Panc1 (cell line): ENCODE measurements at regions of chr4 and their contacts with region 1.

Region 1: GRCh38 chr4:183249857-183250256 is 70.2 kb downstream of the CLDN22 start:
- DNase-seq: no peak
- ATAC-seq: 0 out of 2 replicates have a peak, but pooled peaks have one; percentile 68
- H3K4me3 ChIP-seq: no peak overlapping the region
- H3K27ac ChIP-seq: peak overlapping the region; percentile 12; the same call in 1 of the 2 replicates
- H3K4me1 ChIP-seq: peaks cover 17% of the 10 kb centered on the region
- H3K27me3 ChIP-seq: no peaks in the 10 kb centered on the region
- CTCF ChIP-seq: peak; percentile 44

Region 2: DNA sequence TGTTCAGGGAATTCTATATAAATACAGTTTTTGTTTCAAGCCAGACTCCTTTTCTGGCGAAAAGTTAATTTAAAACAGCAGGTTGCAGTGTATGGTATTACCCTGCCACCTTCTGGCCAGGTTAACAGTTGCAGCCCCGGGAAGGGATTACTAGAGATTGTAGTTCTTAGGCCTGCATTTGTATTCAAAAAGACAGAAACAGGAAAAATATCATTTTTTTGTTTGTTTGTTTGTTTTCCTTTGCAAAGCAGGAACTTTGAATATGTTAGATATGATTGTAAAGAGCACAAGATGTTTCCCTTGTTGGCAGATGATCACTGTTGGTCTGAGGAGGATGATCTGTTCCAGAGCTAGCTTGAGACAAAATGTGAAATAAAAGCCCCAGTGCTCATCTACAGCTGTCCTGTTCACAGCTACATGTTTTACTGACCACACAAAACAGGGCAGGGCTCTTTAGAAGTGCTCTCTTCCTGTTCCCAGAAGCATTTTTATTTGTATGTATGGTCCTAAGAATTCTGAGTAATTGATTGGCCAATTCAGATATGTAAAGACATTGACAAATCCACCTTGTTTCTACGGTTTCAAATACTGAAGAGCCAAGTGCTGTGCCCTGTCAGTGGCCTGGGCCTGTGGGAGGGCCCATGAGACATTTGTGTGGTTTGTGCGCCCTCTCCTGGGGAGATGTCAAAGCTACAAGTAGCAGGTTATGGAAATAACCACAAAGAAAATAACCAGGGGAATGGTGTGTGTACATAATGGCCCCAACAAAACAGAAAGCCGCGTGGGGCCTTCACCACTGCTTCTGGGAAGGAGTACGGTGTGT is 12.3 kb after region 1 on chr4:
- CTCF ChIA-PET with region 1: interaction called, 10 read pairs
- POLR2A ChIA-PET with region 1: no interaction called
- in situ Hi-C with region 1: no loop called
- intact Hi-C with region 1: no loop called
- DNase-seq: no peak
- ATAC-seq: peak; percentile 89
- H3K4me3 ChIP-seq: no peak overlapping the region
- H3K27ac ChIP-seq: peak overlapping the region; percentile 66
- H3K4me1 ChIP-seq: peaks cover 12% of the 10 kb centered on the region
- H3K27me3 ChIP-seq: no peaks in the 10 kb centered on the region
- CTCF ChIP-seq: peak; percentile 77